Activated T-helper 1 cell treated with anti-CD3 and anti-CD28 coated beads, Interleukin-12 subunit alpha, Interleukin-12 subunit beta, Interleukin-2, Interleukin-4 antibody, amounts not matched to agents 30 ng/mL and 10 ng/mL and 1 ng/mL, durations not matched to agents 14 hours and 24 hours and 36 hours (primary cell): ENCODE measurements at regions of chr1 and their contacts with region 1.

Region 1: DNA sequence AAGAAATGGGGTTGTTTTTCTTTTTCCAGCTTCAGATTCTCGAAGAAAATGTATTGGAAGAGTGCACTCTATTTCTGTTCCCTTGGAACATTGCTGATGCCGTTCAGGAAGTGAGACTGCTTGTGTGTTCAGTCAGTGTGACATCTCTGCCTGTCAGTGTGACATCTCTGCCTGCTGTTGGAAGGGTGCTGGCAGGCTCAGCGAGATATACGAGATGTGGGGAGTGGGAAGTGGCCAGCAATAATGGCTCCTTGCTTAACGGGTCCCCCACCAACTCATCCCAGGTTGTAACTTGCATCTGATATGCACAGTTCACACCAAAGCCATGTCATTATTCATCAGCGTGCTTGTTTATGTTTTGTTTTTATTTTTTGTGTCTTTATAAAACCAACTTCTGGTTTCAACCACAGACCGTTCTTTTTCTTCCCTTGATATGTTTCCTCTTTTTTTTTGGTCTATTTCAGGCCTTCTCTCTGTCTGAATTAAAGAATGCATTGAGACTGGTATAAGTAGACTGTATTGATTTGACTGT is 145.4 kb downstream of the GALNT2 start:
- DNase-seq: no peak
- H3K4me3 Mint-ChIP-seq: peak overlapping the region; percentile 34
- H3K27ac Mint-ChIP-seq: peak overlapping the region; percentile 91
- H3K4me1 Mint-ChIP-seq: peaks cover 65% of the 10 kb centered on the region
- H3K27me3 Mint-ChIP-seq: no peaks in the 10 kb centered on the region

Region 2: GRCh38 chr1:229661022-229661877 is 551.2 kb before region 1 on chr1:
- intact Hi-C with region 1: loop called (anchors 5 kb)
- DNase-seq: peak; percentile 49
- H3K4me3 Mint-ChIP-seq: no peak overlapping the region
- H3K27ac Mint-ChIP-seq: no peak overlapping the region
- H3K4me1 Mint-ChIP-seq: peaks cover 21% of the 10 kb centered on the region
- H3K27me3 Mint-ChIP-seq: no peaks in the 10 kb centered on the region

Region 3: GRCh38 chr1:230109895-230110667 is 102.4 kb before region 1 on chr1:
- intact Hi-C with region 1: loop called (anchors 1 kb)
- DNase-seq: peak; percentile 57
- H3K4me3 Mint-ChIP-seq: peak overlapping the region; percentile 53
- H3K27ac Mint-ChIP-seq: peak overlapping the region; percentile 89
- H3K4me1 Mint-ChIP-seq: peaks cover 82% of the 10 kb centered on the region
- H3K27me3 Mint-ChIP-seq: no peaks in the 10 kb centered on the region

Region 4: GRCh38 chr1:230186003-230186863 is 26.2 kb before region 1 on chr1:
- intact Hi-C with region 1: loop called (anchors 1 kb)
- DNase-seq: no peak
- H3K4me3 Mint-ChIP-seq: no peak overlapping the region
- H3K27ac Mint-ChIP-seq: peak overlapping the region; percentile 74
- H3K4me1 Mint-ChIP-seq: peaks cover 41% of the 10 kb centered on the region
- H3K27me3 Mint-ChIP-seq: no peaks in the 10 kb centered on the region

Region 5: DNA sequence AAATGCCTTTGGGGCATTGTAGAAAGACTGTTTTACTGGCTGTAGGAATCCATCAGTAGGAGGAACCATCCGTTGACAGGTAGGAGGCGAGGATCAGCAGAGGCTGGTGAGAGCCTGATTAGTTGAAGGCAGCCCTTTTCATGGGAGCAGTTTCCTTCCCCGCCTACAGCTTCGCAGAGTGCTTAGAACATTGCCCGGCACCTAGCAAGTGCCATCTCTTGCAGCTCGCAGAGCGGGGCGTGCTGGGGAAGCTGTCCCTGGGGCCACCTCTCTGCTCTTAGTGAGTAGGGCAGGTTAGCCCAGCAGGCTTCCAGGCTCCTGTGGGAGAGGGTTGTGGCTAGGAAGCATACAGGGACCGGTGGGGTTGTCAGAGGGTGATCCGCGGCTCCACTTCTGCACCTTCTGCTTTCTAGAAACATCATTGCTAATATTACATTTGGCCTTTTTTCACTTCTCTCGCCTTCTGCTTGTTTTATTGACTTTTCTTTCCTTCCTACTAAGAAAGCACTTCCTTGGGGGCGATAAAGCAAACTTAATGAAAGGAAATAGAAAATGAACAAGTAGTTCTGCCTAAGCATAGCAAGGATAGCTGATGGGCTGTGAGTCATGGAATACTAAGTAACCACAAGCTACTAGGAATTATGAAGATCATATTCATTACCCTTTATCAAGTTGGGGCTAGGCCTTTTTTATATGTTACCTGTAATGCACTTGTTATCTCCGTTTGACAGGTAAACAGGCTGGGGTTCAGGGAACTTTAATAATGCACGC is 31.3 kb after region 1 on chr1:
- intact Hi-C with region 1: loop called (anchors 1 kb)
- DNase-seq: no peak
- H3K4me3 Mint-ChIP-seq: no peak overlapping the region
- H3K27ac Mint-ChIP-seq: no peak overlapping the region
- H3K4me1 Mint-ChIP-seq: peaks cover 47% of the 10 kb centered on the region
- H3K27me3 Mint-ChIP-seq: no peaks in the 10 kb centered on the region

Region 6: DNA sequence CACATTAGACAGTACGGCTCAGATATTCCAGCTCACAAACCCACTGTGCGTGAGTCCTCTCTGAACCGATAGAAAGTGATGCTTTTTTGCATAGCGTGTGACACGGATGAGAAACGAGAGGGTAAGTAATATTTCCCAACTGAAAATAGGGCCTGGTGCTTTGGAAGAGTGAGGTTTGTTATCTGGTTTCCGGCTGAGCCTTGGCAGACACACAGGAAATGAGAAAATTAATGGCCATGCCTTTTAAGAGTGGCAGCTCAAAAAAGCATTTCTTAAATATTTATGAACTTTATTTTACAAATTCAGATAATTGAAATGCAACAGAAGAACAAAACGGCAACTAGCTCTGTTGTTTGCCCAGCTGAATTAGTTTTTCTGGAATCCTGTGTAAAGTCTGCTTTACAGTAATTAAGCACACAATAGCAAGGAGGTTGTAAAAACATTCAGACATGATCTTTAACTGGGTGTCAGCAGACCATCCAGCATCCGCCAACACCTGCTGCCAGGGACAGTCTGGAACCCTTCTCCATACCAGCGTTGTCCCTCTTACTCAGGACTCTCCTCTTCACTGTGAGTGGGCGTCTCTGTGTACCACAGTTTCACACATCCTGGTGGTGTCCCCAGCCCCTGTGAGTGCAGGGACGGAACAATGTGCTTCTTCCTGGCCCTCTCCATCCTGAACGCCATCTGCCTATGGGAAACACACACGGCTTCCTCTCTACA is 58.2 kb after region 1 on chr1:
- intact Hi-C with region 1: loop called (anchors 1 kb)
- DNase-seq: no peak
- H3K4me3 Mint-ChIP-seq: no peak overlapping the region
- H3K27ac Mint-ChIP-seq: peak overlapping the region; percentile 89
- H3K4me1 Mint-ChIP-seq: peaks cover 28% of the 10 kb centered on the region
- H3K27me3 Mint-ChIP-seq: no peaks in the 10 kb centered on the region

Region 7: DNA sequence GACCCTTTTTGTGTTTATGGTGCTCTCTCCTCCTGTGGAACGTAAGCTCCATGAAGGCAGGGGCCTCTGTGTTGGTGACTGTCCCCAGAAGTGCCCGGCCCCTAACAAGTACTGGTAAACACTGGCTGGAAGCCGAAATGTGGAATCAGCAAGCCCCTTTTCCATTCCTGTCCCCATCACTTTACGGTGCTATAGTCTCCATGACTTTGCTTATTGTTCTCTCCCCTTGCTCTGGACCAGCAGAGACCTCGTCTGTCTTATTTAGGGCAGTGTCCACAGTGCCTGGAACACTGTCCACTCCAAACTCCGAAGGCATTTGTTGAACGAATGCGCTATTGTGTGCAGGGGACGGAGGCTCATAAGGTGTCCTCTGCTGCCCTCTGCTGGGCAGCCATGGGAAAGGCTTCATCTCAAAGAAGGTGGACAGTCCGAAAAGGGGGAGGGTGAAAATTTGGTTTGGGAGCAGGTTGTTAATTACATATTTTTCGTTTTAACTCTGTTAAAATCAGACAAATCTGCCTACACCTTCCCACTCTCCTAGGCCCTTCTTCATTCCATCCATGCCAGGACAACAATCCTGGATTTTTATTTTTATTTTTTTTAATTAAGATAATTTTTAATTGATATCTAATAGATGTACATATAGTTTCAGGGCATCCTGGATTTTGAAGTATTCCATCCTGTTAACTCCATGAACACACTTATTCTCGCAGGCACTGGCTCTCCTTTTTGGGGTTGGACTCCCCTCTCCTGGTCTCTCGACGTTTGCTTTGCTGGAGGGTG is 98.1 kb after region 1 on chr1:
- intact Hi-C with region 1: loop called (anchors 1 kb)
- DNase-seq: peak; percentile 43
- H3K4me3 Mint-ChIP-seq: no peak overlapping the region
- H3K27ac Mint-ChIP-seq: no peak overlapping the region
- H3K4me1 Mint-ChIP-seq: peaks cover 4% of the 10 kb centered on the region
- H3K27me3 Mint-ChIP-seq: peaks cover 14% of the 10 kb centered on the region